ENCODE measurements at regions of chr20 and their contacts with region 1.

Region 1: GRCh38 chr20:62861726-62862336 is at the start of gene TCFL5:
- DNase-seq: peak; percentile 53 to 93
- H3K4me3 ChIP-seq: peak within 1 kb of the TSS; percentile 57 to 69
- H3K27ac ChIP-seq: peak within 1 kb of the TSS; percentile 56 to 63
- H3K4me1 ChIP-seq: peaks cover 4 to 7% of the 10 kb centered on the region in 2 donors
- H3K27me3 ChIP-seq: no peaks in the 10 kb centered on the region
- CTCF ChIP-seq: no peak
- total RNA-seq, gene TCFL5: 1.1 TPM

Region 2: DNA sequence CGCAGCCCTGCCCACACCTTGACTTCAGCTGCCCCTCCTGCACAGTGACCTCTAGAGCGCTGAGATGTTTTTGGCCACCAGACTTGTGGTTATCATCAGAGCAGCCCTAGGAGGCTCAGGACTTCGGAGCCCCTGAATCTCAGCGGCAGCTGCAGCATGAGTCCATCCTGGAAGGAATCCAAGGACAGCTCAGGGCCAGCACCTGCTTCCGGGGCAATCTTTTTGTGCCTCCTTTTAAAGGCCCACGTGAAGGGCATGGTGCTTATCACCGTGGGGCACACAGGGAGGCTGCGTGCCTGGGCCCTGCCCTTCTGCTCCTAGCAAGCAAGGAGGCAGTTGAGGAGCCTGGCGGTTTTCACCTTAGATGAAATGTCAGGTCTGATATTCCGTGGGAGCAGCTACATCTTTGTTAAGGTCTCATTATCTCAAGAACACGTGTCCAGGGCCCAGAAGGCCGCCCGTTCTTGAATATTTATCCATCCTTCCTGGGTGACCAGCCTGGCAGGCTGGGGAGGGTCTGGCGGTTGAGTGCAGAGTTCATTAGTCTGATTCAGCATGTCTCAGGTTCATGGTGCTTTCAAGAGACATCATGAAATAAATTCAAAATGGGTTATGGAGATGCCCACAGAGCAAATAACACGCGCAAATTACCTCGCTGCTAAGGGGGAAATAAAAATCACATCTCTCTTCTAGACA is 1188.5 kb before region 1 on chr20:
- intact Hi-C with region 1: no loop called
- DNase-seq: no peak
- H3K4me3 ChIP-seq: no peak overlapping the region
- H3K27ac ChIP-seq: no peak overlapping the region
- H3K4me1 ChIP-seq: no peaks in the 10 kb centered on the region
- H3K27me3 ChIP-seq: no peaks in the 10 kb centered on the region
- CTCF ChIP-seq: no peak

Region 3: DNA sequence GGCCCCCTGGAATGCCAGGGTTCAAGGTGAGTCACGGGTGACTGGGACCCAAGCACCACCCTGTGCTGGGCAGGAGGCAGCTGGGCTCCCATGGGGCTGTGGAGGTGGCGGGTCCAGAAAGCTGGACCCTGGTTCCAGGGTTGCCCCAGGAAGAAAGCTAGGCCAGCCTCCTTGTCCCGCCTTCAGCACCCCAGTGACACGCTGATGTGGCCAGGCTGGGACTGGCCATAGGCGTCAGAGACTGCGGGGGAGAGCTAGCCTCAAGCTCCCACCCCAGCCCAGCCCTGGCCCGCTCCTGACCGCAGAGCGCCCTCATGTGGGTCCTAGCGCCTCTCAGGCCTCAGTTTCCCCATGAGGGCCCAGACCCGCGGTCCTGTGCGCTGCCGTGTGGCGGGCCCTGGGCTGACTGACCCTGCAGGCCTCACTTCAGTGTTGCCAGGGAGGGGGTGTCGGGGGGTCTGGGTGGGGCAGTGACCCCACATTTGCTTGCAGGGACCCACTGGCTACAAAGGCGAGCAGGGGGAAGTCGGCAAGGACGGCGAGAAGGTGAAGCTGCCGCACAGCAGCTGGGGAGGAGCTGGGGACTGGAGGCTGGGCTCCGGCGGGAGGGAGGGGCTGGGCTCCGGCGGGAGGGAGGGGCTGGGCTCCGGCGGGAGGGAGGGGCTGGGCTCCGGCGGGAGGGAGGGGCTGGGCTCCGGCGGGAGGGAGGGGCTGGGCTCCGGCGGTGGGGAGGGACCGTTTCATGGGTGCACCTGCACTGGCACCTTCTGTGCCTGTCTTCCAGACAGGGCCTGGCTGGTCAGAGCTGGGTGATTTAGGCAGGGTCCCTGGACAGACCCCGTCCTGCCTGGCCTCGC is 37.1 kb before region 1 on chr20:
- intact Hi-C with region 1: loop called (anchors 2 kb)
- DNase-seq: peak in 1 of 2 donors; percentile 84
- H3K4me3 ChIP-seq: peak overlapping the region; percentile 56 to 58
- H3K27ac ChIP-seq: peak overlapping the region; percentile 52 to 66
- H3K4me1 ChIP-seq: peaks cover 7 to 15% of the 10 kb centered on the region in 2 donors
- H3K27me3 ChIP-seq: no peaks in the 10 kb centered on the region
- CTCF ChIP-seq: no peak

Region 4: GRCh38 chr20:63101781-63102719 is 240.2 kb after region 1 on chr20:
- intact Hi-C with region 1: loop called (anchors 5 kb)
- DNase-seq: peak in 1 of 2 donors; percentile 66
- H3K4me3 ChIP-seq: peak overlapping the region; percentile 73
- H3K27ac ChIP-seq: peak overlapping the region; percentile 47 to 88
- H3K4me1 ChIP-seq: peaks cover 5% of the 10 kb centered on the region in 2 donors
- H3K27me3 ChIP-seq: no peaks in the 10 kb centered on the region
- CTCF ChIP-seq: no peak

Measured in ascending aorta (tissue), 2 donors.